Ovary (tissue), 10 donors: ENCODE measurements at regions of chr3 and their contacts with region 1.

Region 1: DNA sequence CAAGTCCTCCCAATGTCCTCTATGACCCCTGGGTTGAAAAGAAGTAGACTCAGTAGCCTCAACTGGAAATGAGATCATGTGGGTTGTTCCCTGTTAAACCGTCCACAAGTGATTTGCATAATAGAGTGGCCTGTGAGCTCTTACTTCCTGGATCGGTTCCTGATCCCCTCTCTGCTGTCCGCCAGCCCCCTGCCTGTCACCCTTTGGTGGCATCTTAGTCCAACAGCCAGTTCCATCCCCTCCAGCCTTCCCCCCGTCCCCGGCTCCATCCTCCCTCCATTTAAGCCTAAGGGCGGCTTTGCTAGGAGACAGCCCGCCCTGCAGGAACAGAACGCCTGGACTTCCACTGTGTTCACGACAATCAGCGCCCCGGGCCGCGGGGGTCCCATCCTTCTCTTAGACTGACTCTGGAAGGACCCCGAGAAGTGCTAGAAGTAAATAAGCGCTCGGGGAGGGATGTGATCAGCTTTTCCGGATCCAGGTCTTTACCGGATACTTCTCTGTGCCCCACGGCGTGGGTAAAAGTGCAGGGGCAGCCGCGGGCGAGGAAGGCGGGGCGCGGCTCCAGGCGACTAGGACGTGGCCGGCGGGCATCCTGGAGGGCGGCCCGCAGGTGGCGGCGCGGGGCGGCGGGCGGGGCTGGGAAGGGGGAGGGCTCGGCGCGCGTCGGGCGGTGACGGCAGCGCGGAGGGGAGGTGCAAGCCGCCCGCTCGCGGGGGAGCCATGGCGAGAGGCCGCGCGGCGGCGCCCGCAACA is 51.2 kb upstream of the ULK4 start:
- DNase-seq: peak; percentile 62 to 80 (median 75)
- H3K4me3 ChIP-seq: peak overlapping the region; percentile 85
- H3K27ac ChIP-seq: peak overlapping the region in 1 of 2 donors; percentile 36
- H3K4me1 ChIP-seq: peaks cover 10% of the 10 kb centered on the region
- H3K27me3 ChIP-seq: no peaks in the 10 kb centered on the region
- CTCF ChIP-seq: no peak
- EP300 ChIP-seq: no peak
- POLR2A ChIP-seq: peak; percentile 25

Region 2: GRCh38 chr3:41961750-41962679 is 51.1 kb before region 1 on chr3 and contains the start of gene ULK4:
- intact Hi-C with region 1: loop called in 2 of 4 experiments (anchors 5 to 10 kb)
- DNase-seq: peak; percentile 96 to 98 (median 97)
- H3K4me3 ChIP-seq: peak within 1 kb of the TSS; percentile 72
- H3K27ac ChIP-seq: peak within 1 kb of the TSS in 1 of 2 donors; percentile 51
- H3K4me1 ChIP-seq: peaks cover 1% of the 10 kb centered on the region
- H3K27me3 ChIP-seq: no peaks in the 10 kb centered on the region
- CTCF ChIP-seq: no peak
- EP300 ChIP-seq: peak; percentile 73
- POLR2A ChIP-seq: peak; percentile 53
- total RNA-seq, gene ULK4: 4.7 to 58.7 (median 9.5) TPM

Region 3: DNA sequence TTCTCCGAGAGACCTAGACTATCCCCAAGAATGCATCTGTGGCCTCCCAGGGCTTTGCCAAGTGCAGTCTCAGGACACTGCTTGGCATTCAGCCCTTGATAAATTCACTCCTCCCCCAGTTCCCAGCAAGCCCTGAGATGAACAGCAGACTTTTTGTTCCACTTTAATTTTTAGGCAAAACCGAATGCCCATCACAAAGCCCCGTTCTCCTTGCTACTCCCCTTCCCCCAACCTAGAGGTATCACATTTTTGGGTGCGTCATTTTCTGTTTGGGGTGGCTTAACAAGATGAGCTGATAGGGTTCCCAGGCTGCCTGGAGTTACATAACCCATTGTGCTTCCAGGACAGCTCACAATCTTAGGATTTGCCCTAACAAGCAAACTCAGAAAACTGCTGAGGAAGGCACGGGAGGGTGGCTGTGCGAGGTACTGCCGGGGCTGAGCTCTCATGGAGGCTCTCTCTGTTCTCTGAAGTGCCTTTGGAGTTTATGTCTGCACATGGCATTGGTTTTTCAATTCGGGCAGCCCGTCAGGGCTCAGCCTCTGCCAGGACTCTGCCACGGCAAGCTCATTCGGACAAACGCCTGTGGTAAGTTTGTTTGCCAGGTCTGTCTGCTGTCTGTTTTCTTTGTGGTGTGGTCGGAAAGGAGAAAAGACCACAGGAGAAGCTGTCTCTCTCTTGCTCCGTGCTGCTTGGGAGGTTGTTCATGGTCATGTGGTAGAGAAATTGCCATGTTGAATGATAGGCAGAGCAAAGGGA is 78.0 kb after region 1 on chr3 and contains the start of gene TRAK1:
- intact Hi-C with region 1: loop called in 1 of 4 experiments (anchors 10 kb)
- DNase-seq: peak in 2 of 5 donors; percentile 27 to 45
- H3K4me3 ChIP-seq: no peak within 1 kb of the TSS
- H3K27ac ChIP-seq: no peak within 1 kb of the TSS
- H3K4me1 ChIP-seq: no peaks in the 10 kb centered on the region
- H3K27me3 ChIP-seq: no peaks in the 10 kb centered on the region
- CTCF ChIP-seq: no peak
- EP300 ChIP-seq: no peak
- POLR2A ChIP-seq: no peak
- total RNA-seq, gene TRAK1: 11.7 to 17.7 (median 14.9) TPM